CD8-positive, alpha-beta memory T cell (primary cell): ENCODE measurements at regions of chr1 and their contacts with region 1.

Region 1: GRCh38 chr1:78126506-78126905 is 80.7 kb downstream of the GIPC2 start:
- DNase-seq: no peak
- H3K4me3 ChIP-seq: no peak overlapping the region
- H3K4me3 Mint-ChIP-seq: no peak overlapping the region
- H3K27ac ChIP-seq: no peak overlapping the region
- H3K27ac Mint-ChIP-seq: no peak overlapping the region
- H3K4me1 ChIP-seq: no peaks in the 10 kb centered on the region
- H3K4me1 Mint-ChIP-seq: no peaks in the 10 kb centered on the region
- H3K27me3 ChIP-seq: no peaks in the 10 kb centered on the region
- H3K27me3 Mint-ChIP-seq: no peaks in the 10 kb centered on the region

Region 2: GRCh38 chr1:78114034-78114956 is 12.2 kb before region 1 on chr1:
- CTCF ChIA-PET with region 1: interaction called, 11 read pairs
- POLR2A ChIA-PET with region 1: no interaction called
- DNase-seq: peak; percentile 15 to 58 (median 46)
- H3K4me3 ChIP-seq: no peak overlapping the region
- H3K4me3 Mint-ChIP-seq: no peak overlapping the region
- H3K27ac ChIP-seq: no peak overlapping the region
- H3K27ac Mint-ChIP-seq: no peak overlapping the region
- H3K4me1 ChIP-seq: no peaks in the 10 kb centered on the region
- H3K4me1 Mint-ChIP-seq: peaks cover 0 to 4% (median 0%) of the 10 kb centered on the region in 3 donors
- H3K27me3 ChIP-seq: no peaks in the 10 kb centered on the region
- H3K27me3 Mint-ChIP-seq: peaks cover 0 to 5% of the 10 kb centered on the region in 2 donors